ENCODE measurements at regions of chr12 and their contacts with region 1.

Region 1: DNA sequence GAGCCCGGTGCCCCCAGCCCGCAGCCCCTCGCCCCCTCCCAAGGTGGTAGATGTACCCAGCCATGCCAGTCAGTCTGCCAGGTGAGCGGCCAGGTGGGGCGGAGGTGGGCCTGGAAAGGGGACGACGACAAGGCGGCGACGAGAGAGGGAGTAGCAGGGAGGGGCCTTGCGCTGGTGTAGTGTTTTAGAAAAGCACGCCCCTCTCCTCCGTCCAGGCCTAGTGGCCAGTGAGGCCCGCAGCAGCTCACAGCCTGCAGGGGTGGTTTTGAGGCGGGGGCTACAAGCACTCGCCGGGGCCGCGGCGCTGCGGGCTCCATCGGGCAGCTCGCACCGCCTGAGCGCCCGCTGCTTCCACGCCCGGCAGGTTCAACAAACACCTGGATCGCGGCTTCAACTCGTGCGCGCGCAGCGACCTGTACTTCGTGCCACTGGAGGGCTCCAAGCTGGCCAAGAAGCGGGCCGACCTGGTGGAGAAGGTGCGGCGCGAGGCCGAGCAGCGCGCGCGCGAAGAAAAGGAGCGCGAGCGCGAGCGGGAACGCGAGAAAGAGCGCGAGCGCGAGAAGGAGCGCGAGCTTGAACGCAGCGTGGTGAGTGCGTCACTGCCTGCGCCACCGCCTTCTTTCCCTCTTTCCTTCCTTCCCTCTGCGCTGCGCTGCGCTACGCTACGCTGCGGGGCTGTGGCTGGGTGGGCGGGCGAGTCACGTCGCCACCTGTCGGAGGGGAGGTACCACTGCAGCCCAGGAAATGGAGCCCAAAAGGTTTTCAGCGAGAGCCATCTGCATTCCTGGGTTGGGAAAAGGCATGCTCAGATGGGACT is 5.9 kb upstream of the RNU7-1 start:
- DNase-seq: peak; percentile 97
- ATAC-seq: peak; percentile 94
- H3K4me3 Mint-ChIP-seq: peak overlapping the region; percentile 87
- H3K27ac Mint-ChIP-seq: peak overlapping the region; percentile 96
- H3K4me1 Mint-ChIP-seq: peaks cover 45% of the 10 kb centered on the region
- H3K27me3 Mint-ChIP-seq: no peaks in the 10 kb centered on the region

Region 2: GRCh38 chr12:6758506-6759095 is 179.1 kb before region 1 on chr12:
- CTCF ChIA-PET with region 1: no interaction called
- DNase-seq: no peak
- ATAC-seq: no peak
- H3K4me3 Mint-ChIP-seq: no peak overlapping the region
- H3K27ac Mint-ChIP-seq: no peak overlapping the region
- H3K4me1 Mint-ChIP-seq: peaks cover 18% of the 10 kb centered on the region
- H3K27me3 Mint-ChIP-seq: peaks cover 18% of the 10 kb centered on the region

Region 3: DNA sequence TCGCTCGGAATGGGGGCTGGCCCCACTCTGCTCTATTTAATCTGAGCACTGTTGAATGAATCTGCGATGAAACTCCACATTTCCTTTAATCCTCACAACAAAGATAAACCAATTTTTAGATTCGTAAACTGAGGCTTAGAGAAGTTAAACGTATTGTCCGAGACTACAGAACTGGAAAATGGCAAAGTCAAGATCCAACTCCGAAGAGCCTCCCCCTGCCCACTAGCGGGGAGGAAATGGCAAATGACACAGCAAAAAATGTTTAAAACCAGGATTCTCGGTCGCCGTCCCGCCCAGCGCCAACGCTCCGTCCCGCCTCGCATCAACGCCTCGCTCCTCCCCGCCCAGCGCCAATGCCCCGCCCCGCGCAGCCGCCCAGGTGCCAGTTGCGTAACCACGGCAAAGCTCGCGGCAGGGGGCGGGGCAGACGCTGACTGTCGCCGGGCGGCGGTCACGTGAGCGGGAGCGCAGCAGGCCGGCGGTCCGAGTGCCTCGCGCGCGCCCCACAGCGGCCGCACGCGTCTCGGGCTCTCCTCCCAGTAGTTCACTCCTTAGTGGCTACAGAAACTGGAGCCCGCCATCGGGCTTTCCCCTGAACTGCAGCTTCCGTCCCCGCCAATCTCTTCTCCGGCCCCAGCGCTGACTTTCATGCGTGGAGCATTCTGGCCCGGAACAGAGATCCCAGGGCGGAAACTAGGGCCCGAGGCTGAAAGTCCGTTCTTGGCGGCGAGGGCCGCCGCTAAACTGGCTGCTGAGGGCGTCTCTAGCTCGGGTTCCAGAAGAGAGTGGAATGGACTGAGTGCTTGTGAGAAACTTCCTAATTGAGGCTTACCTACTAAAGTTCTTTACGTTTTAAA is 46.7 kb before region 1 on chr12:
- CTCF ChIA-PET with region 1: interaction called, 10 read pairs
- DNase-seq: peak; percentile 99
- ATAC-seq: peak; percentile 95
- H3K4me3 Mint-ChIP-seq: peak overlapping the region; percentile 80
- H3K27ac Mint-ChIP-seq: peak overlapping the region; percentile 93
- H3K4me1 Mint-ChIP-seq: peaks cover 29% of the 10 kb centered on the region
- H3K27me3 Mint-ChIP-seq: no peaks in the 10 kb centered on the region

Region 4: GRCh38 chr12:6904280-6905278 is 33.1 kb before region 1 on chr12 and contains the start of gene LRRC23:
- CTCF ChIA-PET with region 1: interaction called, 10 read pairs
- DNase-seq: peak; percentile 99
- ATAC-seq: peak; percentile 98
- H3K4me3 Mint-ChIP-seq: no peak within 1 kb of the TSS
- H3K27ac Mint-ChIP-seq: no peak within 1 kb of the TSS
- H3K4me1 Mint-ChIP-seq: peaks cover 3% of the 10 kb centered on the region
- H3K27me3 Mint-ChIP-seq: no peaks in the 10 kb centered on the region
- total RNA-seq, gene LRRC23: 4.9 to 8.7 TPM

Region 5: GRCh38 chr12:6953442-6954315 is 16.0 kb after region 1 on chr12:
- CTCF ChIA-PET with region 1: interaction called, 709 read pairs
- DNase-seq: peak; percentile 91
- ATAC-seq: peak; percentile 31
- H3K4me3 Mint-ChIP-seq: peak overlapping the region; percentile 93
- H3K27ac Mint-ChIP-seq: peak overlapping the region; percentile 96
- H3K4me1 Mint-ChIP-seq: peaks cover 79% of the 10 kb centered on the region
- H3K27me3 Mint-ChIP-seq: no peaks in the 10 kb centered on the region

Region 6: GRCh38 chr12:6965026-6965661 is 27.5 kb after region 1 on chr12:
- CTCF ChIA-PET with region 1: interaction called, 709 read pairs
- DNase-seq: peak; percentile 91
- ATAC-seq: peak; percentile 58
- H3K4me3 Mint-ChIP-seq: no peak overlapping the region
- H3K27ac Mint-ChIP-seq: peak overlapping the region; percentile 82
- H3K4me1 Mint-ChIP-seq: peaks cover 61% of the 10 kb centered on the region
- H3K27me3 Mint-ChIP-seq: no peaks in the 10 kb centered on the region

Region 7: DNA sequence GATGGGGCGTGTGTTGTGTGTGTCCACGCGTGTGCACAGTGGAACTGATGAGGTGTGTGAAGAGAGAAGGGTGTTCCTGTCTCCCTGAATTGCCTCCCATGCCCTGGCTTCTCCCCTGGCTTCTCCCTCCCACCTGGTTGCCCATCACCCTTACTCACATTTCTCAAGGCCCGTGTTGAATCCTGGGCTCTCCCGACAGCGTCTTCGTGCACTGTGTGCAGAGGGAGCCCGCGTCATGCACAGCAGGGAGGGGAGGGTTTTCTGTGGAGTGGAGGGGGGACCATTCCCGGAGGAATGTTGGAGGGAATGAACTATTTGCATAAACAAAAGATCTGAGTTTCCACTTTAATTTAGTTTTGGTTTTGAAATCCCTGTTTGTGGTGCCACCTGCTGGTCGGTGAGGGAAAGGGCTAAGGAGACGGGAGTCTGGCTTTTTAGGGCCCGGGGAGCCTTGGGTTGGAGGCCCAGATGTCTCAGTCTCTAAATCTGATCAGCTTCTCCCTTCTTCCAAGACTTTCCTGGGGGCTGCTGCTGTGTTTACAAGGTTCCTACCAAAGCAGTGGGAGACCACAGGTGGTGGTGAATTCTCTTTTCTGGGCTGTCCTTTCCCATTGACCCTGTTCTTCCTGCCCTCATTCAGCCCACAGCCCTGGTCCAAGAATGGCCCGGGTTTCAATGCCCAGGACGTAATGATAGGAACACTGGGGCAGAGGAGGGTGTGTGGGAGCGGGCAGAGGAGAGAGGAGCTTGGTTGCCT is 154.7 kb after region 1 on chr12 and contains the start of gene C1R:
- CTCF ChIA-PET with region 1: no interaction called
- DNase-seq: peak; percentile 78
- ATAC-seq: peak; percentile 76
- H3K4me3 Mint-ChIP-seq: peak within 1 kb of the TSS; percentile 72
- H3K27ac Mint-ChIP-seq: peak within 1 kb of the TSS; percentile 84
- H3K4me1 Mint-ChIP-seq: peaks cover 6% of the 10 kb centered on the region
- H3K27me3 Mint-ChIP-seq: no peaks in the 10 kb centered on the region
- total RNA-seq, gene C1R: 4.0 to 5.3 TPM

Region 8: DNA sequence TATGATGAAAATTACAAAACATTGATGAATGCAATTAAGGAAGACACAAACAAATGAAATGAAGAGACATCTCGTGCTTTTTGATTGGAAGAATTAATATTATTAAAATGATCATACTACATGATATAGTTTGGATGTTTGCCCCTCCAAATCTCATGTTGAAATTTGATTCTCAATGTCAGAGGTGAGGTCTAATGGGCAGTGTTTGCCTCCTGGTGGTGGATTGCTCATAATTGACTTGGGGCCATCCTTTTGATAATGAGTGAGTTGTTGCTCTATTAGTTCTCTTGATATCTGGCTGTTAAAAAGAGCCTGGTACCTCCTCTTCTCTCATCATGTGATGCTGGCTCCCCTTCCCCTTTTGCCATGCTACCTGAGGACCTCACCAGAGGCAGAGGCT is 449.6 kb after region 1 on chr12:
- CTCF ChIA-PET with region 1: no interaction called
- DNase-seq: no peak
- ATAC-seq: no peak
- H3K4me3 Mint-ChIP-seq: no peak overlapping the region
- H3K27ac Mint-ChIP-seq: no peak overlapping the region
- H3K4me1 Mint-ChIP-seq: no peaks in the 10 kb centered on the region
- H3K27me3 Mint-ChIP-seq: peaks cover 20% of the 10 kb centered on the region

Measured in activated CD8-positive, alpha-beta memory T cell treated with anti-CD3 and anti-CD28 coated beads, Interleukin-2, amount 10 ng/mL, durations not matched to agents 7 days and 5 days (primary cell).